ENCODE measurements at regions of chr22 and their contacts with region 1.

Region 1: DNA sequence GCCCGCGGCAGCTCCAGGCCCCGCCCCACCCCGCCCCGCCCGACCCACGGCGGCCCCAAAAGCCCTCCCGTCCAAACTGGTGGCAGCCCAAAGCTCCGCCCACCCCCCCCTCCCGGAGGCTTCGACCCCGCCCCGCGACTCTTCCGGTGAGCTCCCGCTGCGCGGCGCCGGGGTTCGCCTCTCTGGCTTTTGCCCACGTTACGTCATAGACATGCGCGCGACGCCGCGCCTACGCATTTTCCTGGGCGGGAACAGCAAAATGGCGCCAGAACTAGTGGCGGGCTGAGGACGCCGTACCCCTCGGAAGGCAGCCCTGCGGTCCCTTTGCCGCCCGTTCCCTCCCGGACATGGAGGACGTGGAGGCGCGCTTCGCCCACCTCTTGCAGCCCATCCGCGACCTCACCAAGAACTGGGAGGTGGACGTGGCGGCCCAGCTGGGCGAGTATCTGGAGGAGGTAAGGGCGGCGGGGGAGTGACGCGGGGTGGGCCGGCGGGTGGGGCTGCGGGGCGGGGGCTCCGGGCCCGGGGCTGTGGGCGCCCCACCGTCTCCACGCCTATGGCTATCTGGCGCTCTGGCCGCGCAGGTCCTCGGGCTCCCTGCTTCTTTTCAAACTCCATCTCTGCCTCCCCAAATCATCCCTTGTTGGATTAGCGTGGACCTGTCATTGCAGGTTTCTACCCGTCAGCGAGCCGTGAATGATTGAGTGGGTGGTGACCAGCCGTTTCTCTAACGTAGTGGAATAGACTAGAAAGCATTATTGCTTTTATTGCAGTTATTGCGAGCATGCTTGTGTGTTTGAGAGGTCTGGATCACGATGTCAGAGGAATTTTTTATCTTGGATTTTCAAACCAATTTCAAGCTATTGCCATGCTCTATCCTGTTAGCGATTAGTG is at the start of gene NCAPH2:
- DNase-seq: peak; percentile 70 to 97
- H3K4me3 ChIP-seq: peak within 1 kb of the TSS; percentile 83 to 94
- H3K27ac ChIP-seq: peak within 1 kb of the TSS; percentile 80 to 97
- H3K4me1 ChIP-seq: peaks cover 10 to 20% of the 10 kb centered on the region in 2 donors
- H3K27me3 ChIP-seq: no peaks in the 10 kb centered on the region
- CTCF ChIP-seq: no peak
- total RNA-seq, gene NCAPH2: 41.7 TPM

Region 2: DNA sequence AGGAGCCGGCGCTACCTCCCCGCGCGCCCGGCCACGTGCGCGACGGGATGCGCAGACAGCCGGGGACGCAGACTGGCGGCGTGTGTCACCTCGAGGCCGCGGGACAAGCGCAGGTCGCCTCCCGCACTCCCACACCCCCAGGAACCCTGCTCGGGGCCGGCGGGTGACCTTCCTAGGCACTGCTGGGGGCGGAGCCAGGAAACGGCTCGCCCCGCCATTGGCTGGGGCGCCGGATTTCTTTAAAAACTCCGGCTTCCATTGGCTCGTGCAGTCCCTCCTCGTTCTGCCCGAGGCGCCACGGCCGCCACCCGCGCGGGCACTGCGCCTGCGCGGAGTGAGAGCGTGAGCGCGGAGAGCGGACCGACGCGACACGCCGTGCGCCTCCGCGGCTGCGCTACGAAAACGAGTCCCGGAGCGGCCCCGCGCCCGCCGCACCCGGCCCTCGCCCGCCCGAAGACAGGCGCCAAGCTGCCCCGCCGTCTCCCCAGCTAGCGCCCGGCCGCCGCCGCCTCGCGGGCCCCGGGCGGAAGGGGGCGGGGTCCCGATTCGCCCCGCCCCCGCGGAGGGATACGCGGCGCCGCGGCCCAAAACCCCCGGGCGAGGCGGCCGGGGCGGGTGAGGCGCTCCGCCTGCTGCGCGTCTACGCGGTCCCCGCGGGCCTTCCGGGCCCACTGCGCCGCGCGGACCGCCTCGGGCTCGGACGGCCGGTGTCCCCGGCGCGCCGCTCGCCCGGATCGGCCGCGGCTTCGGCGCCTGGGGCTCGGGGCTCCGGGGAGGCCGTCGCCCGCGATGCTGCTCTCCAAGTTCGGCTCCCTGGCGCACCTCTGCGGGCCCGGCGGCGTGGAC is 547.9 kb before region 1 on chr22 and contains the start of gene PIM3:
- intact Hi-C with region 1: loop called (anchors 10 kb)
- DNase-seq: peak; percentile 79 to 96
- H3K4me3 ChIP-seq: peak within 1 kb of the TSS; percentile 85 to 89
- H3K27ac ChIP-seq: peak within 1 kb of the TSS; percentile 88 to 96
- H3K4me1 ChIP-seq: peaks cover 0 to 18% of the 10 kb centered on the region in 2 donors
- H3K27me3 ChIP-seq: no peaks in the 10 kb centered on the region
- CTCF ChIP-seq: peak in 1 of 3 experiments; percentile 33
- total RNA-seq, gene PIM3: 269 TPM

Region 3: GRCh38 chr22:50218996-50219727 is 289.1 kb before region 1 on chr22:
- intact Hi-C with region 1: no loop called
- DNase-seq: no peak
- H3K4me3 ChIP-seq: no peak overlapping the region
- H3K27ac ChIP-seq: no peak overlapping the region
- H3K4me1 ChIP-seq: no peaks in the 10 kb centered on the region
- H3K27me3 ChIP-seq: no peaks in the 10 kb centered on the region
- CTCF ChIP-seq: no peak

Region 4: GRCh38 chr22:50244420-50245213 is 263.6 kb before region 1 on chr22 and contains the start of gene TUBGCP6:
- intact Hi-C with region 1: loop called (anchors 2 kb)
- DNase-seq: peak; percentile 63 to 98
- H3K4me3 ChIP-seq: peak within 1 kb of the TSS; percentile 70 to 91
- H3K27ac ChIP-seq: peak within 1 kb of the TSS; percentile 92 to 95
- H3K4me1 ChIP-seq: peaks cover 14 to 35% of the 10 kb centered on the region in 2 donors
- H3K27me3 ChIP-seq: no peaks in the 10 kb centered on the region
- CTCF ChIP-seq: peak in 1 of 3 experiments; percentile 11
- total RNA-seq, gene TUBGCP6: 58.1 TPM

Region 5: DNA sequence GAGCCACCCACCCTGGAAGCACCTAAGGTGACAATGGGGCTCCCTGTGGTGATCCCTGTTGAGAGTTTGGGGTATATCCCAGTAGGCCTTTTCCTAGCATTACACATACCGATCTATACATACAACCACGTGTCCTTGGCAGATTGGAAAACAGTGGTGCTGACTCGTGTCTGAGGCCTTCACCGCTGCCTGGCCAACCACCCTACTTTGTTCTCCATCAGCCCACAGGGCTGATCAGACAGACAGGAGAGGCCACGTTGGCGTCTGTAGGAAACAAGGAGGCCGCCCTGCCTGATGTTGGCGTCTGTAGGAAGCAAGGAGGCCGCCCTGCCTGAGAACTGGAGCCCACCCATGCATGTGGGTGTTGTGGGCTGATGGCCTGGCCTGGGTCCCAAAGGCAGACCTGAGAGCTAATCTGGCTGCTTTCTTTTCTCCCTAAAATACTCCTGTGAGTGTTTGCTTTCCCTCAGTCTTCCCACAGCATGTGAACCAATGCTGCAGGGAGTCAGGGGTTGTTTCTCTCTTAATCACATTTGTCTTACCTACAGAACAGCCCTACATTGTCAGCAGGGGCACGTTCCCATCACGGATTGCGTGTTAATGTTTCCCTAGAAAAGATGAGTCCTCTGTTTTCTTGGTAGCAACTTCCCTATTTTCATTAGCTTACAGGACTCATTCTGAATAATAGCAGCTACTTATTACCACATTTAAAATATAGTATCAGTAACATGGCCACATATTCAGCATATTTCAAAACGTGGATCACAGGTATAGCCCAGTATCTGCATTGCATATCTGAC is 90.6 kb before region 1 on chr22:
- intact Hi-C with region 1: no loop called
- DNase-seq: no peak
- H3K4me3 ChIP-seq: no peak overlapping the region
- H3K27ac ChIP-seq: no peak overlapping the region
- H3K4me1 ChIP-seq: no peaks in the 10 kb centered on the region
- H3K27me3 ChIP-seq: no peaks in the 10 kb centered on the region
- CTCF ChIP-seq: no peak

Region 6: GRCh38 chr22:50469377-50470305 is 38.6 kb before region 1 on chr22:
- intact Hi-C with region 1: no loop called
- DNase-seq: peak; percentile 62 to 85
- H3K4me3 ChIP-seq: no peak overlapping the region
- H3K27ac ChIP-seq: no peak overlapping the region
- H3K4me1 ChIP-seq: peaks cover 21 to 38% of the 10 kb centered on the region in 2 donors
- H3K27me3 ChIP-seq: no peaks in the 10 kb centered on the region
- CTCF ChIP-seq: no peak

Region 7: GRCh38 chr22:50525390-50526068 is 17.3 kb after region 1 on chr22 and contains the start of gene SCO2:
- intact Hi-C with region 1: loop called (anchors 1 kb)
- DNase-seq: peak; percentile 77 to 97
- H3K4me3 ChIP-seq: peak within 1 kb of the TSS; percentile 75 to 79
- H3K27ac ChIP-seq: peak within 1 kb of the TSS; percentile 85 to 93
- H3K4me1 ChIP-seq: peaks cover 6 to 20% of the 10 kb centered on the region in 2 donors
- H3K27me3 ChIP-seq: no peaks in the 10 kb centered on the region
- CTCF ChIP-seq: peak; percentile 47 to 54 (median 54)
- total RNA-seq, gene SCO2: not detected

Region 8: DNA sequence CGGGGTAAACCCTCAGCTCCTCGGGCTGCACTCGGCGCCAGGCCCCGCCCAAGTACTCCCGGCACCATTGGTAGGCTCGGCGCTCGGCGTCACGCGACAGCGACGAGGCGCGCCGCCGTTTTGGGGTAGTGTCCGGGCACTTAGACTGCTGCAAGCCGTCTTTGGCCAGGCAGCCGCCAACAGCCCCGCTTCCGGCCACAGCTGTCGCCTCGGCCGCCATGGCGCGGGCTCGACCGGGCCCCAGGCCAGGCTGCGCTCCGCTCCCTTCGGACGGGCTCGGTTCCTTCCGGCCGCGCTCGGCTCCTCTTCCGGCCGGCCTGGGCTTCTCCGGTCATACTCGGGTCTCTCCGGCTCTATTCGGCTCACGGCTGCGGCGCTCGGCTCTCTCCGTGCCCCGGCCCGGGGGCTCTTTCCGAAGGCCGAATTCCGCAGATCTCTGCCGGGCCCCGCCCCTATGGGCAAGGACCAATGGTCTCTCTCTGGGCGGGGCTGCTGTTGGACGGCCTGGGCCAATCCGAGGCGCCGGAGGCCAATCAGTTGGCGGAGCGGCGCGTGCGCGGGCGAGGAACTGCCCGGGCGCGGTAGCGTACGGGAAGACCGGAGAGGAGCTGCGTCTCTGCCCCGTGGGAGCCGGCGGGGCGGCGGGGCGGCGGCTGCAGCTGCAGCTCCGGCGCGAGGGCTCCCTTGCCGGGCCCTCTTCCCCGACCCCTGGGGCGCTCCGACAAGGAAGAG is 74.5 kb after region 1 on chr22 and contains the start of gene CHKB:
- intact Hi-C with region 1: loop called (anchors 1 kb)
- DNase-seq: peak; percentile 92 to 99
- H3K4me3 ChIP-seq: peak within 1 kb of the TSS; percentile 65 to 82
- H3K27ac ChIP-seq: peak within 1 kb of the TSS; percentile 95 to 99
- H3K4me1 ChIP-seq: peaks cover 7 to 23% of the 10 kb centered on the region in 2 donors
- H3K27me3 ChIP-seq: peaks cover 5% of the 10 kb centered on the region
- CTCF ChIP-seq: no peak
- total RNA-seq, gene CHKB: 82.4 TPM